ENCODE measurements at regions of chr1 and their contacts with region 1.

Region 1: DNA sequence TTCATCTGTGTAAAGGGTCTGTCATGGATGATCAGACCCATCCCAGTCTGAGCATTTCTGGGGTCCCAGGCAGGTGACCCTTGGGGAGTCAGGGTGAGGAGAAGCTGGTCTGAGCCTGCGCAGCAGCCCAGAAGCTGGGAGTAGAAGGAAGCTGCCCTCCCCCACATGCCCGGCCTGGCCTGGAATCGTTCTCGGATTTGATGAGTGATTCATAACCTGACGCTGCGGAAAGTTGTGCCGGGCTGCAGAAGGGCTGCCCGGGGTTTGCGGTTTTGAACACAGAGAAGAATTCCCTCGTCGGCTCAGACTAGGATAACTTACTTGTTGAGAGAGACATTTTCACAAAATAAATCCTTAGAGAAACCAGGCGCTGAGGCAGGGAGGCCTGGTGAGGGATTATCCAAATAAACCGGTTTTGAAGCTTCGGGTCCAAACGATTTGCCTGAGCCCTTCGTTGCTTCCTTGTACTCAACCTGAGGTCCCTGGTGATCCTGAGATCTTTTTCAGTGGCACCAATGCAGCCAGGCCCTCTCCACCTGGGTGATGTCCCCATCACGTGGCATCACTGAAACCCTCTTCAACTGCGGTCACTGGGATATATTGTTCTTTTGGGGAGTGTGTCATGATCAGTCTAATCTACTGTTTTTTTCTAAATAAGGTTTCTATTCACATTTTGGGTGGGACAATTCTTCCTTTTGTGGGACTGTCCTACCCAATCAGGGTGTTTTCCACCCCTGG is 29.2 kb downstream of the EPHB2 start:
- H3K4me3 Mint-ChIP-seq: no peak overlapping the region
- H3K27ac Mint-ChIP-seq: peak overlapping the region; percentile 11
- H3K4me1 Mint-ChIP-seq: peaks cover 48% of the 10 kb centered on the region
- H3K27me3 Mint-ChIP-seq: peaks cover 11% of the 10 kb centered on the region

Region 2: DNA sequence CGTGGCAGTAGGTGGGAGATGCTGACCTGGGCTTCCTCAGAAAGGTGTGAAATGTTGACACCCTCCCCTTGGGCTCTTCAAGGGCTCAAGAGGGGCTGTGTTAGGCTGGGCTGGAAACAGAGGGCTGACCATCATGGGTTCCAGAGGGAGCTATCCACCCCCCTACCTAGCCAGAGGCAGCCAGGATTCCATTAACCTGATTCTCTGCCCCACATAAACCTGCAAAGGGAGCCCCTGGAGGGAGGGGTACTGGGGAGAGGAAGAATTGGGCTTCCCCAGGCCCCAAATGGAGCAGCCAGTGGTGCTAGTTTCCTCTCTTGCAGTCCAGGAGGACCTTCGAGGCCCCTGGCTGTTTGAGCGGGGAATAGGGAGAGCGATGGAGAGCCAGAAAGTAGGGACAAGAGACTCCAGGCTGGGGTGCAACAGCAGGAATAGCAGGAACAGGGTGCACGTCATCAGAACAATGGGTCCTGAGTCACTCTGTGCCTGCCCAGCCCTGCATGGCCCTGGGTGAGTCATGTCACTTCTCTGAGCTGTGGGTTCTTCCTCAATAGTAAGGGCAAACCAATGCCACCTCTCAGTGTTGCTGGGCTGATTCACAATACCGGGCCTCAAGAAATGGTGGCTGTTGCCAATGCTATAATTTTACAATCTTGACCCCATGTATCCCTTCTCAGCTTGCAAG is 92.1 kb after region 1 on chr1:
- intact Hi-C with region 1: loop called (anchors 10 kb)
- H3K4me3 Mint-ChIP-seq: no peak overlapping the region
- H3K27ac Mint-ChIP-seq: peak overlapping the region; percentile 77
- H3K4me1 Mint-ChIP-seq: peaks cover 29% of the 10 kb centered on the region
- H3K27me3 Mint-ChIP-seq: peaks cover 9% of the 10 kb centered on the region